HEK293 (cell line): ENCODE measurements at regions of chr1 and their contacts with region 1.

Region 1: GRCh38 chr1:204207136-204207616 is 6.6 kb downstream of the GOLT1A start:
- H3K4me3 ChIP-seq: no peak overlapping the region
- H3K27ac ChIP-seq: no peak overlapping the region
- H3K4me1 ChIP-seq: no peaks in the 10 kb centered on the region
- CTCF ChIP-seq: peak; percentile 85

Region 2: DNA sequence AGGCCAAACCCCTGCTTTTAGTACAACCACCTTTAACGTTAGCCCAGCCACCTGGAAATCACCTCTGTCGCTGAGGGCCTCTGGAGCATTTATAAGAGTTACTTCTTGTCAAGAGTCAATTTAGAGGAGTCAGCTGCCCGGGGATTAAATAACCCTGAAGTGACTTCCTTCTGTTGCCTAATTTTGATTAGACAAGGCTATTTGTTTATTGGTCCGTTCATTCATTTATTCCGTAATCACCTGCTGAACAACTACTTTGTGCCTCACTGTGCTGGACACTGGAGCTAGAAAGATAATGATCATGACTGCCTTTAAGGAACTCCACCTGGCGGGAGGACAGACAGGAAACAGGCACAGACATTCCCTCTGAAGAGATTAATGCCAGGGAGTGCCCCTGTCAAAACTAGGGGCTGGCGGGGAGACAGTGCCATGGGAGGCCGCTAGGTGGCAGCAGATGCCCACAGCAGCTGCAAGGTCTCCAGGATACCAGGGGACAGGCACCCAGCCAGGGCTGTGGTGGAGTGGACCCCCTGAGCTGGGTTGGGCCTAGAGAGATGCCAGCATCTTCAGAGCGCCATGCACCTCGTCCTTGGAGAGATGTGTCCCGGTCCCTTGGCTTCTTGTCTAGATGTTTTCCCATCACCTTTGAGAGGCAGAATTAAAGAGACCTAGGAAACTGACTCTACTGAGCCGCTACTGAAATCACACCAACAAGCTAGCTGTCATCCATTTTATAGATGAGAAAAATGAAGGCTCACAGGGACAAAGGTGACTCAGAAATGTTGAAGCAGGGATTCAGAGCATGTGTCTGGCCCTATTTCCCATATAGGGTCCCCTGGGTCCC is 44.7 kb before region 1 on chr1:
- CTCF ChIA-PET with region 1: interaction called, 89 read pairs
- POLR2A ChIA-PET with region 1: no interaction called
- H3K4me3 ChIP-seq: no peak overlapping the region
- H3K27ac ChIP-seq: no peak overlapping the region
- H3K4me1 ChIP-seq: no peaks in the 10 kb centered on the region
- CTCF ChIP-seq: peak; percentile 95

Region 3: DNA sequence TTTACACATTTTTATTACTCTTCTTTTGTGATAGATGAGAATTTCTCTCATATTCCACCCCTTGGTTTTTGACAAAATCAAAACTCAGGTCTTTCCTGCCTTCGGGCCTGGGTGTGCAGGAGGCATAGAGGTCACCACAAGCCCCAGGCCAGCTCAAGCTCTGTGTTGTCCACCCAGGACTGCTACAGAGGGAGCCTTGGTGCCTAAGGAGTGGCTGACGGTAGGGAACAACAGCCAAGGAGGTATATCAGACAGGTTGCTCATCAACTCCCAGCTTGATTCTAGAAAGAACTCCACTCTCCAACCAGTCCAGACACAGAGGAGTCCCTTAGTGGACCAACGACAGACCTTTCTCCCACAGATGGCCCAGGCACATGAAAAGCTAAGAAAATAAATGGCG is 24.3 kb before region 1 on chr1:
- CTCF ChIA-PET with region 1: interaction called, 16 read pairs
- POLR2A ChIA-PET with region 1: no interaction called
- H3K4me3 ChIP-seq: no peak overlapping the region
- H3K27ac ChIP-seq: no peak overlapping the region
- H3K4me1 ChIP-seq: no peaks in the 10 kb centered on the region
- CTCF ChIP-seq: no peak

Region 4: DNA sequence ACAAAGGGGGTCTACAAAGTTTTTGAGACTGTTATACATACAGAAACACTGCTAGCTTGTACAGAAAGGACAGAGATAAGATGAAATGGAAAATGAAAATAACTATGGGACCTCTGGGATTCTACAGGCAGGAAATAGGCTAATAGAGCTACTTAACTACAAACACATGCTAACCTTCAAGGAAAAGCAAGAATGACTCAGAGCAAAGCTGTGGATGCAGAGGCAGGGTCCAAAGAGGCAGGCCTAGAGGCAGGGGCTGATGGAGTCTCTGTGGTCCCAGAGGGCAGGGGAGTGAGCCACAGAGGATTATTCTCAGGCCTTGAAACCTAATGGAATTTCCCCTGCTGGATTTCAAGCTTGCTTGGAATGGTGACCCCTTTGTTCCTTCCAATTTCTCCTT is 25.4 kb after region 1 on chr1:
- CTCF ChIA-PET with region 1: interaction called, 19 read pairs
- POLR2A ChIA-PET with region 1: no interaction called
- H3K4me3 ChIP-seq: no peak overlapping the region
- H3K27ac ChIP-seq: no peak overlapping the region
- H3K4me1 ChIP-seq: no peaks in the 10 kb centered on the region
- CTCF ChIP-seq: no peak

Region 5: DNA sequence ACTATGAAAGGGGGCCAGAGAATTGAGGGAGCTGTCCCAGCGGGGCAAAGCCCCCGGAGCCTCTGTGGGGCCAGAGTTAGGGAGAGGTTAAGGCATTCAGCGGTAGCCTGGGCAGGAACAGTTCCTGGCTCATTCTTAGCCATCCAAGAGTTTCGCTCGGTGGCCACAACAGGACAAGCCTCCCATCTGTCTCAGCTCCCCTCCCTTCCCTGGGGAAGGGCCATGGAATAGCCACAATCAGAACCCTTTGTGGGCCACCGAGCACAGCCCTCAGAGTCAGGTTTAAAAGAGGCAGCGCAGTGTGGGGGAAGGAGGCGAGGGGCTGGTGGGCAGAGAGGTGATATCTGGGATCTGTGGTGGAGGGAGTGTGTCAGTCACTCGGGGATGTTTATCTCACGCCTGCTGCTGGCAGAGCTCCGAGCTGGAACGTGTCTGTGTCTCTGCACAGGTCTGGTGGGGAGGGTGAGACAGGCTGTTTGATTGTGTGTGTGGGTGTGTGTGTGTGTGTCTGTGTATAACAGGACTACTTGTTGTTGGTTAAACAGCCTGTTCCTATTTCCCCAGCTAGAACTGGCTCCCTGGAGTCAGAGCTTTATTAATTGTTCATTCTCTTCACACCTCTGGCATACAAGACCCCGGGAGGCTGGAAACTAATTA is 56.2 kb after region 1 on chr1:
- CTCF ChIA-PET with region 1: interaction called, 12 read pairs
- POLR2A ChIA-PET with region 1: no interaction called
- H3K4me3 ChIP-seq: no peak overlapping the region
- H3K27ac ChIP-seq: no peak overlapping the region
- H3K4me1 ChIP-seq: no peaks in the 10 kb centered on the region
- CTCF ChIP-seq: no peak

Region 6: DNA sequence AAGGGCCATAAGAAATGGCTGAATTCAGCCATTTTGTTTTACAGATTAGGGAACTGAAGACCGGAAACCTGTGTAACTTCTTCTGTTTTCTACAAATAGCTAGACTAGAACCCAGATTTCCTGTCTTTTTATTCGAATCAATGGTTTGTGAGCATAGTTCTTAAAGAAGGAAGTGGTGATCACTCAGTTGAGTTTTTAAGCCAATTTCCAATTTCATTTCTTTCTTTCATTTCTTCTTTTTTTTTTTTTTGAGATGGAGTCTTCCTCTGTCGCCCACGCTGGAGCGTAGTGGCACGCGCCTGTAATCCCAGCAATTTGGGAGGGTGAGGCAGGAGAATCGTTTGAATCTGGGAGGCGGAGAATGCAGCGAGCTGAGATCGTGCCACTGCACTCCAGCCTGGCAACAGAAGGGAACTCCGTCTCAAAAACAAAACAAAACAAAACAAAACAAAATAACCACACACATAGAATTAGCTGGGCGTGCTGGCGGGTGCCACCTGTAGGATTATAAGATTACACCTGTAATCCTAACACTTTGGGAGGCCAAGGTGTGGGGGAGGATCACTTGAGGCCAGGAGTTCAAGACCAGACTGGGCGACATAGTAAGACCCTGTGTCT is 306.0 kb after region 1 on chr1:
- CTCF ChIA-PET with region 1: no interaction called
- POLR2A ChIA-PET with region 1: no interaction called
- H3K4me3 ChIP-seq: no peak overlapping the region
- H3K27ac ChIP-seq: no peak overlapping the region
- H3K4me1 ChIP-seq: no peaks in the 10 kb centered on the region
- CTCF ChIP-seq: no peak